Activated naive CD4-positive, alpha-beta T cell treated with anti-CD3 and anti-CD28 coated beads, Interleukin-2, amount 10 ng/mL, durations not matched to agents 7 days and 5 days (primary cell): ENCODE measurements at regions of chr22 and their contacts with region 1.

Region 1: GRCh38 chr22:37817705-37818408 is 5.3 kb upstream of the GALR3 start:
- DNase-seq: peak; percentile 84
- H3K4me3 Mint-ChIP-seq: peak overlapping the region; percentile 15
- H3K27ac Mint-ChIP-seq: no peak overlapping the region
- H3K4me1 Mint-ChIP-seq: peaks cover 18% of the 10 kb centered on the region
- H3K27me3 Mint-ChIP-seq: peaks cover 56% of the 10 kb centered on the region

Region 2: DNA sequence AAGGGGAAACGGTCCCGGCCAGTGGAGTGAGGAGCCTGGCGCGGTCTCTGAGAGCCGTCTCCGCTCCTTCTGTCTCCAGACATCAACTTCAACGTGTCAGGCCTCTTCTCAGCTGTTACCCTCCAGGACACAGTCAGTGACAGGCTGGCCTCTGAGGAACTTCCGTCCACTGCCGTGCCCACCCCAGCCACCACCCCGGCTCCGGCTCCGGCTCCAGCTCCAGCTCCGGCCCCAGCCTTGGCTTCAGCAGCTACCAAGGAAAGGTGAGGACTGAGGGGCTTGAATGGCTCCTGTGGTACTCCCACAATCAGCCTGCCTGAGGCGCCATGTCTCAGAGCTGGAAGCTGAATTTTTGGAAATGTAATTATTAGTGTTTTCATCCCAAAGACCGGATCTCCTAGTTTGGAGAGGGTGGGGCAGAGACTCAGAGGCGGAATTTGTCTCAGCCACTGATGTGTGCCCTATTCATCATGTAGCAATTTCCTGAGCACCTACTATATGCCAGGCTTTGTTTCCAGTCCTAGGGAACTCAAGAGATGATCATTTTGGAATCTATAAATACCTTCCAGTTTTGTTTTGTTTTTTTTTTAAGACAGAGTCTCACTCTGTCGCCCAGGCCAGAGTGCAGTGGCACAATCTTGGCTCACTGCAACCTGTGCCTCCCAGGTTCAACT is 167.3 kb before region 1 on chr22:
- CTCF ChIA-PET with region 1: no interaction called
- DNase-seq: no peak
- H3K4me3 Mint-ChIP-seq: no peak overlapping the region
- H3K27ac Mint-ChIP-seq: no peak overlapping the region
- H3K4me1 Mint-ChIP-seq: peaks cover 2% of the 10 kb centered on the region
- H3K27me3 Mint-ChIP-seq: no peaks in the 10 kb centered on the region

Region 3: GRCh38 chr22:37807410-37808293 is 10.2 kb before region 1 on chr22 and contains the start of gene GCAT:
- CTCF ChIA-PET with region 1: interaction called, 38 read pairs
- DNase-seq: peak; percentile 96
- H3K4me3 Mint-ChIP-seq: peak within 1 kb of the TSS; percentile 76
- H3K27ac Mint-ChIP-seq: peak within 1 kb of the TSS; percentile 58
- H3K4me1 Mint-ChIP-seq: peaks cover 55% of the 10 kb centered on the region
- H3K27me3 Mint-ChIP-seq: peaks cover 71% of the 10 kb centered on the region

Region 4: DNA sequence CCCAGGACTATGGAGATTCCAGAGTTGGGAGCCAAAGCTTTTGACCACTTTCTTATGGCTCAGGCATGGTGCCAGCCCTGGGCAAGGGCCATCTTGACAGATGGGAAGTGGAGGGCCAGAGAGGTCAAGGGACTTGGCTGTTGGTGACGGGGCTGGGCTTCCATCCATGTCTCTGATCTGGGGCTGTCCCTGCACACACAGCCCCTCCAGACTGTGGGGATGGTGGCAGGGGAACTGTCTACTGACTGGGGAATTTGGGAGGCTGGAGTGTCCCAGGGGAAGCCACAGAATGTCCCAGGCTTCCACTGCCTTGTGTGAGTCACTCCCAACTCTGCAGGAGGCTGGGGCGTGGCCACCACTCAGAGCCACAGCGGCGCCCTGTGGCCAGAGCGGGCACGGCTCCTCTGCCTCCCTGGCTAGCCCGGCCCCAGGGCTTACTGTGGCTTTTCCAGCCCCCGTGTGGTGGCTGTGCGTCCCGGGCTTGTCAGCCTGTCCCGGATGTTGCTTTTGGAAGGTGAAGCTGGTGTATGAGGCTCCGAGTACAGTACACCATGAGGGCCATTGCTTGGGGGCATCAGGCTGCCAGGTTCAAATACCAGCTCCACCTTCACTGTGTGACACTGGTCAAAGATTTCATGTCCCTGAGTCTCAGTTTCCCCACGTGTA is 116.0 kb after region 1 on chr22:
- CTCF ChIA-PET with region 1: interaction called, 33 read pairs
- DNase-seq: peak; percentile 92
- H3K4me3 Mint-ChIP-seq: no peak overlapping the region
- H3K27ac Mint-ChIP-seq: peak overlapping the region; percentile 11
- H3K4me1 Mint-ChIP-seq: peaks cover 17% of the 10 kb centered on the region
- H3K27me3 Mint-ChIP-seq: no peaks in the 10 kb centered on the region

Region 5: DNA sequence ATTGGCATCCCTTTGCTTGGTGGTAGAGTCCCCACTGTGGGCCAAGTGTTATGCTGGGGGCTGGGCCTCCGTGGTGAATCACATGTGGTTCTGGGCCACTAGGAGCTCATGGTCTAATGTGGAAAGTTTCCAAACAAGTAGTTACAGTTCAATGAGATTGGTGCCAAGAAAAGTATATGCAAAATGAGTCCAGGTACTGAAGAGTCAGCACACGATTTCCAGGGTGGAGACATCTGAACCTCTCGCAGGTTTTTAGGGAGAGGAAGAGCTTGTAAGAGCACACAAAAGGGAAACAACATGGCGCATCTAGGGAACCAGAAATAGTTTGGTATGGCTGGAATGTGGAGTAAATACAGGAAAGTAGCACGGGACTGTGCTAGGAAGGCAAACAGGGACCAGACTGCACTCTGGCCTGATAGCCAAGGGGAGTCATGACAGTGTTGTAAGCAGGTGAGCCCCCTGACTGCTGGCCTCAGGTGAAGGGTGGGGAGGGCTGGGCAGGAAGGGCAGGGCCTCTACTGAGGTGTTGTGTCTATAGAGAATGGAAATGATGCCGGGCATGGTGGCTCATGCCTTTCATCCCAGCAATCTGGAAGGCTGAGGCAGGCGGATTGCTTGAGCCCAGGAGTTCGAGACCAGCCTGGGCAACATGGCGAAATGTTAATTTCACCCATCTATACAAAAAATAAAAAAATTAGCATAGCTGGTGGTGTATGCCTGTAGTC is 148.2 kb after region 1 on chr22:
- CTCF ChIA-PET with region 1: interaction called, 65 read pairs
- DNase-seq: no peak
- H3K4me3 Mint-ChIP-seq: no peak overlapping the region
- H3K27ac Mint-ChIP-seq: no peak overlapping the region
- H3K4me1 Mint-ChIP-seq: peaks cover 2% of the 10 kb centered on the region
- H3K27me3 Mint-ChIP-seq: no peaks in the 10 kb centered on the region